SK-N-SH (cell line): ENCODE measurements at regions of chr7 and their contacts with region 1.

Region 1: GRCh38 chr7:98119256-98119918 is 12.7 kb downstream of the LMTK2 start:
- DNase-seq: no peak
- H3K4me3 ChIP-seq: no peak overlapping the region
- H3K27ac ChIP-seq: peak overlapping the region in 1 of 2 experiments; percentile 54; a peak in 2 of 4 replicates
- H3K4me1 ChIP-seq: peaks cover 10 to 18% of the 10 kb centered on the region in 2 experiments; a peak in 3 of 4 replicates
- H3K27me3 ChIP-seq: no peaks in the 10 kb centered on the region
- CTCF ChIP-seq: no peak
- EP300 ChIP-seq: peak in 1 of 2 experiments; percentile 44; a peak in 1 of 4 replicates
- RAD21 ChIP-seq: no peak

Region 2: DNA sequence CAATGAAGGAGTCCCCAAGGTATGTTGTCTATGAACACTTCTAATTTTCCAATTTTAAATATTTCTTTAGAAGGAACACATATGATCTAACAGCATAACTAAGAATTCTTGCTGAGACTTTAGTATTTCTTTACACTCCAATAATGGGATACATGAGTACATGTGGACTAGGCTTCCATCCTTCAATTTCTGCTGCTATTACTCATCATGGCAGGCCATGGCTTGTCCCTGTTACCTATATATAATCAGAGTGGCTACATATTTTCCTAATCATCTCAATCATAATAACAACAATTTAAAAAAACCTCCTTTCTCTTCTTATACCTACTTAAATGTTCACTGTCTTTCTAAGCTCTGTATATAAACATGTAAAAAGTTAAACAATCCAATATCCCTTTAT is 447.8 kb before region 1 on chr7:
- CTCF ChIA-PET with region 1: no interaction called
- POLR2A ChIA-PET with region 1: no interaction called
- DNase-seq: no peak
- H3K4me3 ChIP-seq: no peak overlapping the region
- H3K27ac ChIP-seq: no peak overlapping the region
- H3K4me1 ChIP-seq: no peaks in the 10 kb centered on the region
- H3K27me3 ChIP-seq: no peaks in the 10 kb centered on the region
- CTCF ChIP-seq: no peak
- EP300 ChIP-seq: no peak
- RAD21 ChIP-seq: no peak

Region 3: DNA sequence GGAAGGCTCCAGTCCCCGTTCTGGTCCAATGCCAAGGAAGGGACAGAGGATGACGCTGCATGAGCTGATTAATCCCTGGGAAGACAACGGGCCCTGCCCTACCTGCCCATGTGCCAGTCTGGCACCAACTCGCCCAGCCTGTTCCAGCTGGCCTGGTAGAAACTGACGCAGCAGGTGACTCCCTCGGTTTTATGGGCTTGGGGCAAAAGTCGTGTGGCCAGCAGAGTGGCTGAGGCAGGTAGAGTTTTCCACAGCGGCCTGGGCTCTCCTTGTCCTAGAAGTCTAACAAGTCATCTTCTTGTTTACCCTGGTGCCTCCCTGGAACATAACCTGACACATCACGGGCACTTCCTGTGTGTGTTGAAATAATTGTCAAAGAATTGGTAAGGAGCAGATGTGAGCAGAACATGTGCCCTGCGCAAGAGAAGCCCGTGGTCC is 33.1 kb before region 1 on chr7:
- CTCF ChIA-PET with region 1: interaction called, 3 read pairs
- POLR2A ChIA-PET with region 1: interaction called, 11 read pairs
- DNase-seq: no peak
- H3K4me3 ChIP-seq: no peak overlapping the region
- H3K27ac ChIP-seq: no peak overlapping the region
- H3K4me1 ChIP-seq: no peaks in the 10 kb centered on the region
- H3K27me3 ChIP-seq: peaks cover 26% of the 10 kb centered on the region; the same call in 1 of the 2 replicates
- CTCF ChIP-seq: no peak
- EP300 ChIP-seq: no peak
- RAD21 ChIP-seq: no peak

Region 4: GRCh38 chr7:98097042-98097645 is 22.2 kb before region 1 on chr7:
- CTCF ChIA-PET with region 1: no interaction called
- POLR2A ChIA-PET with region 1: no interaction called
- DNase-seq: no peak
- H3K4me3 ChIP-seq: no peak overlapping the region
- H3K27ac ChIP-seq: no peak overlapping the region
- H3K4me1 ChIP-seq: no peaks in the 10 kb centered on the region
- H3K27me3 ChIP-seq: no peaks in the 10 kb centered on the region
- CTCF ChIP-seq: no peak
- EP300 ChIP-seq: no peak
- RAD21 ChIP-seq: no peak